Right ventricle myocardium inferior (tissue), 1 donor: ENCODE measurements at regions of chr17 and their contacts with region 1.

Region 1: DNA sequence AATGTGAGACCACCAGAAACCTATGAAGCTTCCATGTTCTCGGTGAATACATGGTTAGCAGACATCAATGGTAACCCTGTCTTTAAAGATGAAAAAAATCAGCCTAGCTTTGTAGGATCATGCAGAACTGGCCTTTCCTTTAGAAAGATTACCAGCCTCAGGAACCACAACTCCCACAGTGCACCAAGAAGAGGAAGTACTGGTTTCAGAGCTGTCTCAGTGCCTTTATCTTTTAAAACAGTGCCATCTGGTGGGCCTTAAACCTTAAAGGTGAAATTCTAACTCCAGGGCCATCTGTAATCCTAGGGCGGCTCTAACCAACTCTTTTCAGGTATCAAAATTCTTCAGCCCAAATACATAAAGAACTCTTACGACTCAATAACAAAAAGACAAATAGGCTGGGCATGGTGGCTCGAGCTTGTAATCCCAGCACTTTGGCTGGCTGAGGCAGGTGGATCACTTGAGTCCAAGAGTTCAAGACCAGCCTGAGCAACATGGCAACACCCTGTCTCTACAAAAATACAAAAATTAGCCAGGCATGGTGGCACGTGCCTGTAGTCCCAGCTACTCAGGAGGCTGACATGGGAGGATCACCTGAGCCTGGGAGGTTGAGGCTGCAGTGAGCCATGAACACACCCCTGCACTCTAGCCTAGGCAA is 5.4 kb downstream of the ATPAF2 start:
- DNase-seq: no peak
- ATAC-seq: peak; percentile 89

Region 2: DNA sequence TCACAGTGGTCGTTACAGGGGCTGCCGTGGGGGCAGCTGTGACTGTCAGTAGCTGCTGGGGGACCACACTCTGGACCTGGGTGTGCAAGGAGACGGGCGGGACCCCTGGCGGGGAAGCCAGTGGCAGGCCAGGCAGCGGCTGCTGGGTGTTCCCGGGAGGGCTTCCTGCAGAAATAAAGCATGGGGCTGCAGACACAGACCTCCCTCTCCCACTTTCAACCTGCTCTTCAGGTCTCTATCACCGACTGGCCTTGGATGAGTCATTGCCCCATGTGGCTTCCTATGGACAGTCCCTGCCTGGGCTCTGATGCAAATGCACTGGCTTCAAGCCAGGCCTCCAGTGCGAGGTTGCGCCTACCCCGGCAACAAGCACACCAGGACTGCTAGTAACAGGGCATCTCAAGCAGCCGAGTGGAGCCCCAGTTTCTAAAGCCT is 214.0 kb before region 1 on chr17:
- intact Hi-C with region 1: loop called (anchors 5 kb)
- DNase-seq: no peak
- ATAC-seq: no peak

Region 3: GRCh38 chr17:17972126-17972951 is 61.2 kb before region 1 on chr17 and contains the starts of genes DRC3 and TOM1L2:
- intact Hi-C with region 1: loop called (anchors 2 kb)
- DNase-seq: peak; percentile 100
- ATAC-seq: peak; percentile 98
- total RNA-seq, gene DRC3: 1.6 TPM
- total RNA-seq, gene TOM1L2: 246 TPM

Region 4: GRCh38 chr17:17994271-17995069 is 39.1 kb before region 1 on chr17:
- intact Hi-C with region 1: loop called (anchors 2 kb)
- DNase-seq: no peak
- ATAC-seq: peak; percentile 67